ENCODE measurements at regions of chr4 and their contacts with region 1.

Region 1: DNA sequence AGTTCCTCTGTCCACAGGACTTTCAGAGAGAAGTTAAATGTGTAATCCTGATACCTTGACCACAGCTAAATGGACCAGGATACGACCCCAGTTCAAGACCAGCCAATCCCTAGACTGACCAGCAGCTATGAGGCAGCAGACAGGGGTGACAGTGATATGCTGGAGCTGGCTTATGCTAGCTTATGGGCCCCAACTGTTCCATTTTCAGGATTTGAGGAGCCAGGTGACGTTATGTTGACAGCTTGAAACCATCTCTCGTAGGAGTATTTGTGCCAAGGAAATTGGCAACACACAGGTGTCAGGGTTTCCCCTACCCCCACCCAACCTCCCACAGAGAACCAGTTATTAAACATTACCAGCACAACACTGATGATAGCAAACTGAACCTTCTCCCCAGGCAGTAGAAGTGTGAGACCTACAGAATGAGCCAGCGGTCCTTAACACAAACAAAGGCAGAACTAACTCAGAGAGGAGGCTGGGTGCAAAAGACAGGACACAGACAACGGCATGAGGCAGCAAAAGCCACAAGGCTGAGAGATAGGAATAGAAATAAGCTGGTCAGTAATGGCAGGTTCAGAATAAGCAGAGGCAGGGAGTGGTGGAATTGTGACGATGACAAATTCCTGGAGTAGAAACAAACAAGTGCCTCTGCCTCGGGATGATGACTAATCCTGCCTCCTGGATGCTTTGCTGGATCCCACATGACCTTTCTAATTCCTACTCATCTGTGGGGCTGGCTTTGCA is 85.6 kb upstream of the CPEB2 start:
- DNase-seq: no peak
- H3K4me3 ChIP-seq: no peak overlapping the region
- H3K27ac ChIP-seq: peak overlapping the region; percentile 56 to 74
- H3K4me1 ChIP-seq: no peaks in the 10 kb centered on the region
- H3K27me3 ChIP-seq: no peaks in the 10 kb centered on the region
- CTCF ChIP-seq: no peak
- POLR2A ChIP-seq: no peak

Region 2: DNA sequence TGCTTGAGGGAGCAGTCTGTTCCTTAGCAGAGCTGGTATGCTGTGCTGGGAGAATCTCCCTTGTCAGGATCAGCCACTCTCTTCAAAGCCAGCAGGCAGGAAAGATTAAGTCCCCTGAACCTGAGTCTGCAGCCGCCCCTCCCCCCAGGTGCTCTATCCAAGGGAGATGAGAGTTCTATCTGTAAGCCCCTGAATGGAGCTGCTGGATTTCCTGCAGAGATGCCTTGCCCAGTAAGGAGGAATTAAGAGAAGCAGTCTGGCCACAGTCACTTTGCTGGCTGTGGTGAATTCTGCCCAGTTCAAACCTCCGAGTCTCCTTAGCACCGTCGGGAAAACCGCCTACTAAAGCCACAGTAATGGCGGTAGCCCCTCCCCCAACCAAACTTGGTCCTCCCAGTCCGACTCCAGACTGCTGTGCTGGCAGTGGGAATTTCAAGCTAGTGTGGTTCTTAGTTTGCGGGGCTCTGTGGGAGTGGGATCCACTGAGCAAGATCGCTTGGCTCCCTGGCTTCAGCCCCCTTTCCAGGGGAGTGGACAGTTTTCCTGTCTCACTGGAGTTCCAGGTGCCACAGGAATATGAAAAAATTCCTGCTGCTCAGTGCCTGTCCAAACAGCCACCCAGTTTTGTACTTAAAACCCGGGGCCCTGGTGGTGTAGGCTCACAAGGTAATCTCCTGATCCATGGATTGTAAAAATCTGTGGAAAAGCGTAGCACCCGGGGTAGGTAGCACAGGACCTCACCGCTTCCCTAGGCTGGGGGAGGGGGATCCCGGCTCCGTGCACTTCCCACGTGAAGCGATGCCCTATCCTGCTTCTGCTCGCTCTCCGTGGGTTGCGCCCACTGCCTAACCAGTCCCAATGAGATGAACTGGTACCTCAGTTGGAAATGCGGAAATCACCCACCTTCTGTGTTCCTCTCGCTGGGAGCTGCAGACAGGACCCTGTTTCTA is 1470.6 kb before region 1 on chr4:
- intact Hi-C with region 1: no loop called
- DNase-seq: no peak
- H3K4me3 ChIP-seq: no peak overlapping the region
- H3K27ac ChIP-seq: no peak overlapping the region
- H3K4me1 ChIP-seq: no peaks in the 10 kb centered on the region
- H3K27me3 ChIP-seq: no peaks in the 10 kb centered on the region
- CTCF ChIP-seq: no peak
- POLR2A ChIP-seq: no peak

Region 3: GRCh38 chr4:14994241-14994640 is 77.5 kb after region 1 on chr4:
- intact Hi-C with region 1: loop called (anchors 2 kb)
- DNase-seq: no peak
- H3K4me3 ChIP-seq: no peak overlapping the region
- H3K27ac ChIP-seq: no peak overlapping the region
- H3K4me1 ChIP-seq: no peaks in the 10 kb centered on the region
- H3K27me3 ChIP-seq: no peaks in the 10 kb centered on the region
- CTCF ChIP-seq: no peak
- POLR2A ChIP-seq: no peak

Region 4: GRCh38 chr4:15006416-15007024 is 89.8 kb after region 1 on chr4:
- intact Hi-C with region 1: no loop called
- DNase-seq: no peak
- H3K4me3 ChIP-seq: no peak overlapping the region
- H3K27ac ChIP-seq: no peak overlapping the region
- H3K4me1 ChIP-seq: peaks cover 0 to 10% of the 10 kb centered on the region in 2 donors
- H3K27me3 ChIP-seq: no peaks in the 10 kb centered on the region
- CTCF ChIP-seq: peak; percentile 26 to 34 (median 28)
- POLR2A ChIP-seq: no peak

Region 5: GRCh38 chr4:15118292-15118691 is 201.6 kb after region 1 on chr4:
- intact Hi-C with region 1: no loop called
- DNase-seq: no peak
- H3K4me3 ChIP-seq: no peak overlapping the region
- H3K27ac ChIP-seq: no peak overlapping the region
- H3K4me1 ChIP-seq: no peaks in the 10 kb centered on the region
- H3K27me3 ChIP-seq: no peaks in the 10 kb centered on the region
- CTCF ChIP-seq: no peak
- POLR2A ChIP-seq: no peak

Region 6: DNA sequence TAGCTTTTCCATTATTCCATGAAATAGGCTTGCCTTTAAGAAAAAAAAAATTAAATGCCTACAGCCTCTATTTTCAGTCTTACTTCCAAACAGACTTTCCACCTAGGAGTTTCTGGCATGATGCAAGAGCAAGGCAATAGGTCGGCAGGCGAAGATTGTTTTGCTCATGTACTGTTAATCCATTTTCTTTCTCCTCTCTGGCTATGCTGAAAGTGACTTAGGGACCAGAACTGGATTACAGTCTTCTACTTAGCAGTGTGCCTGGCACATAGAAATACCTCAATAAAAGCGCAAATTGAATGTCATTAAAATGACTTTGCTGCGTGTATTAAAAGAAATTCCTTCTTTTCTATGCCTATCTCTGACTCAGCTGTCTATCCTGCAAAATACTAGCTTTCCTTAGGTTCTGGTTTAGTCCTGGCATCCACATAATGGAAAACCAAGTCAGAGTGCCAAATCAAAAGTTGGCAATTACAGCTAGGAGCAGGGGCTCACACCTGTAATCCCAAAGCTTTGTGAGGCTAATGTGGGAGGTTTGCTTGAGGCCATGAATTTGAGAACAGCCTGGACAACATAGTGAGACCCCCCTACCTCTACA is 604.8 kb after region 1 on chr4:
- intact Hi-C with region 1: no loop called
- DNase-seq: no peak
- H3K4me3 ChIP-seq: no peak overlapping the region
- H3K27ac ChIP-seq: no peak overlapping the region
- H3K4me1 ChIP-seq: no peaks in the 10 kb centered on the region
- H3K27me3 ChIP-seq: no peaks in the 10 kb centered on the region
- CTCF ChIP-seq: no peak
- POLR2A ChIP-seq: no peak